Activated CD4-positive, alpha-beta T cell treated with anti-CD3 and anti-CD28 coated beads, Interleukin-2, amount 10 ng/mL, durations not matched to agents 24 days and 14 days (primary cell): ENCODE measurements at regions of chr17 and their contacts with region 1.

Region 1: GRCh38 chr17:29807520-29808351 is 122.3 kb downstream of the SSH2 start:
- DNase-seq: peak; percentile 91
- H3K4me3 Mint-ChIP-seq: no peak overlapping the region
- H3K27ac Mint-ChIP-seq: no peak overlapping the region
- H3K4me1 Mint-ChIP-seq: peaks cover 12% of the 10 kb centered on the region
- H3K27me3 Mint-ChIP-seq: no peaks in the 10 kb centered on the region

Region 2: DNA sequence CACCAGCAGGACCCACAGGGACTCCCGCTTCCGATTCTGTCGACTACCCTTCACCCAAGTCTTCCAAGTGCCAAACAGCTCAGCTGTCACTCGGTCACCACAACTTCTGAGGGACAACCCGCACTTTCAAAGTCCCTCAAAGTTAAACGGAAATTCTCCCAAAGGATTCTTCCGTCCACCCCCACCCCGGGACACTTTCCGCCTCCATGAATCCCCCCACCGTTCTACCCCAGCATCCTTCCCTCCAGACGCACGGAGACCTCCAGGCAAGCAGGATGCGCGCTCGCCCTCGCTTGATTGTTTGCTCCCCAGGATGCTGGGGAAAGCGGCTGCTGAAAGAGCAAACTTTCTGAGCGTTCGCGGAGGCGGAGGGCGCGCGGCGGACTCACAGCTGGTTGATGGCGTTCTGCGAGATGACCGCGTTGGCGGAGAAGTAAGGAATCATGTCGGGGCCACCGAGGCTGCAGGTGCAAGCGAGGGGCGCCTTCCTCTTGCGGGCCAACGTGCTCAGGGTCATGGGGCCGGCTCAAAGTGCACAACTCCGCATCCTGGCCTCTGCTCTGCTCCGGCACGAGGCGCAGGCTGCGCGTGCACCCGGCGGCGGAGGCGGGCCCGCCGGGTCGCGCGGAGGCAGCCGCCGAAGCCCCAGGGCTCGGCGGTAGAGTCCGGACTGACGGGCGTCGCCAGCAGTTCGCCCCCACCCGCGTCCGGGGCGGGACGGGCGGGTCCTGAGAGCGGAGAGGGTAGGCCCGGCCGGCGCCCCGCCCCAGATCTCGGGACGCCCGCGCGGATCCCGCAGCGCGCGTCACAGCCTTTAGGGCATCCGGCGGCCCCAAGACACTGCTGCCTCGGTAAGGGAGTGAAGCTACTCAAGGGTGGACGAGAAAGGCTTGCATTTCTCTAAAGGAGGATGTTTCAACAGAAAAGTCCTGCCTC is 46.7 kb before region 1 on chr17:
- intact Hi-C with region 1: no loop called
- DNase-seq: peak; percentile 98
- H3K4me3 Mint-ChIP-seq: peak overlapping the region; percentile 98
- H3K27ac Mint-ChIP-seq: peak overlapping the region; percentile 97
- H3K4me1 Mint-ChIP-seq: peaks cover 35% of the 10 kb centered on the region
- H3K27me3 Mint-ChIP-seq: no peaks in the 10 kb centered on the region

Region 3: GRCh38 chr17:29791336-29792080 is 16.2 kb before region 1 on chr17:
- intact Hi-C with region 1: no loop called
- DNase-seq: no peak
- H3K4me3 Mint-ChIP-seq: no peak overlapping the region
- H3K27ac Mint-ChIP-seq: no peak overlapping the region
- H3K4me1 Mint-ChIP-seq: peaks cover 3% of the 10 kb centered on the region
- H3K27me3 Mint-ChIP-seq: no peaks in the 10 kb centered on the region

Region 4: GRCh38 chr17:30021708-30022317 is 214.1 kb after region 1 on chr17:
- intact Hi-C with region 1: loop called (anchors 2 kb)
- DNase-seq: peak; percentile 78
- H3K4me3 Mint-ChIP-seq: no peak overlapping the region
- H3K27ac Mint-ChIP-seq: no peak overlapping the region
- H3K4me1 Mint-ChIP-seq: no peaks in the 10 kb centered on the region
- H3K27me3 Mint-ChIP-seq: peaks cover 15% of the 10 kb centered on the region

Region 5: DNA sequence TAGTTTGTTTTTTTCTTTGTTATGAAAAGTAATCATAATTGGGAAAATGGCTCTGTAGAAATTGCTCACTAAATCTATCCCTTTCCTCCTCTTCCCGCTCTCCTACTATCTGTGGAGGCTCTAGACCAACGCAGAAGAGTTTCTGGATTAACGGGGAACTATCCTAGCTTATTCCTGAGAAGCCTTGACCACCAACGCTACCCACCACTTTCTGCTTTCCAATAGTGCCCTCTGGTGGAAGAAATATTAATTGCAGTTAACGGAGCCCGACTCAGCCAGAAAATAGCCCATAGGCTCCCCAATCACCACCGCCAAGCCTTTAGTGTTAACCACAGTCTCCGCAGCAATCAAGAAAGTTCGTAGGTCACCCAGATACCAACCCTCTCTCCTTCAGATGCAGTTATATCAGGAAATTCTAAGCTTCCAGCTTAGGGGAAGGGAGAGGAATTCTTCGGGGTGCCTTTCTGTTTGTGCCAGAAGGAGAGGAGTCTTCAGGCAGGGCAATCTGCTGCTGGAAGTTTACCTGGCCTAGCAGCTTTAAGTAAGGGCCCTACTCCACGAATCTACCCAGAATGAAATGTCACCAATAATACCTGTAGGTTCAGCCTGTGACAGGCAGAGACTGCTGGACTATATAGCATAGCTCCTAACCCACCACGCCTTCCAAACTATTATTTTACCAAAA is 285.9 kb after region 1 on chr17:
- intact Hi-C with region 1: loop called (anchors 1 kb)
- DNase-seq: peak; percentile 89
- H3K4me3 Mint-ChIP-seq: no peak overlapping the region
- H3K27ac Mint-ChIP-seq: no peak overlapping the region
- H3K4me1 Mint-ChIP-seq: peaks cover 4% of the 10 kb centered on the region
- H3K27me3 Mint-ChIP-seq: peaks cover 49% of the 10 kb centered on the region